ENCODE measurements at regions of chr2 and their contacts with region 1.

Region 1: DNA sequence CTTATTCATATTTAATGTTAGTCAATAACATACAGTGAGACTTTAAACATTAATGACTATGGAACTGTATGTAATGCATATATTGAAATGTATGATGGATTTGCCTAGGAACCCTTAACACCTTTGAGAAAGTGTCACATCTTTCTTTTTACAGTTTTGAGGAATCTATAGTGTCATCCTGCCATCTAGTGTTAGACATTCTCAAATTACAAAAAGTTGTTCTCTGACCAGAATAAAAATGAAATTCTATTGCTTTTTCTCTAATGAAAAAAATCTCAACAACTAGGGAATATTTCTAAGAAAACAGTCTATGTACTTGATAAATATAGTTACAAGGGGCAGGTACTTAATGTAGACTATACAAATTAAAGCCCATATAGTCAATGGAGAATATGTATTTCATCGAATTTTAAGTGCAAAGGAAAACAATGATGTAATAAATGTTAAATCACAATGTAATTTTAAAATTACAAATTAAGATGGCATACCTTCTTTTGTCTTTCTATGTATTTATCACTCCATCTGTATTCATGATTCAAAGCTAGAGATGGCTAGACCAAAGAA is 5.1 kb upstream of the CALCRL start:
- DNase-seq: no peak
- CTCF ChIP-seq: peak; percentile 39

Region 2: DNA sequence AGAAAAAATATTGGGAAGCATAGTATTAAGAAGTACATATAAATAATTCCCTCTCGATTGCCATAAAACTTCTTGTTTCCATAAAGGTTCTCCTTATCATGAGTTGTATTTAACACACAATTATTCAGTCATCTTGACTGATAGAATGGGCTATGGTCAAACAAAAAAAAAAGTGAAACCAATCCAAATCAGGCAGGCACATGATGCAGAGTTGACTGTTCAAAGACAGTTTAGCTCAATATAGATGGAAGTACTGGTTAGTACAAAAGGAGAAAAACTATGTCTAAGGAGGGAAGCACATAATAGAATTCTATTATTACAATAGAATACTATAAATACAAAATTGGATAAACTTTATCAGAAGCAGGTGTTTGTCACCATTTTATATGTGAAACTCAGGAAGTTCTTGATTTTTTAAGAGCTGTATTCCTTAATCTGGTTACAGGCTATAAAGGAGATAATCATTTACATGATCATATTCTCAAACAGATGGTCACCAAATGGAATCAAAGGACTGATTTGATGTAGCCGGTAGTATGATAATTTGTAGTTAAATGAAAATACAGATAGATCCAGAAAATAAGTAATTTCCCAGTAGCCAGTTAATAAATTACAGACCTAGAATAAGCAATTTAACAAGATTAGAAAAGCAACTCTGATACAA is 13.1 kb after region 1 on chr2:
- CTCF ChIA-PET with region 1: interaction called, 14 read pairs
- POLR2A ChIA-PET with region 1: no interaction called
- DNase-seq: no peak
- CTCF ChIP-seq: no peak

Region 3: GRCh38 chr2:187509667-187510417 is 56.7 kb after region 1 on chr2:
- CTCF ChIA-PET with region 1: no interaction called
- POLR2A ChIA-PET with region 1: no interaction called
- DNase-seq: no peak
- CTCF ChIP-seq: no peak